Mammary epithelial cell (primary cell): ENCODE measurements at regions of chr17 and their contacts with region 1.

Region 1: GRCh38 chr17:13346996-13347765 is 254.5 kb downstream of the HS3ST3A1 start:
- DNase-seq: peak; percentile 95
- H3K4me3 ChIP-seq: no peak overlapping the region
- H3K27ac ChIP-seq: peak overlapping the region; percentile 100
- H3K4me1 ChIP-seq: peaks cover 45% of the 10 kb centered on the region
- H3K27me3 ChIP-seq: no peaks in the 10 kb centered on the region
- CTCF ChIP-seq: no peak

Region 2: DNA sequence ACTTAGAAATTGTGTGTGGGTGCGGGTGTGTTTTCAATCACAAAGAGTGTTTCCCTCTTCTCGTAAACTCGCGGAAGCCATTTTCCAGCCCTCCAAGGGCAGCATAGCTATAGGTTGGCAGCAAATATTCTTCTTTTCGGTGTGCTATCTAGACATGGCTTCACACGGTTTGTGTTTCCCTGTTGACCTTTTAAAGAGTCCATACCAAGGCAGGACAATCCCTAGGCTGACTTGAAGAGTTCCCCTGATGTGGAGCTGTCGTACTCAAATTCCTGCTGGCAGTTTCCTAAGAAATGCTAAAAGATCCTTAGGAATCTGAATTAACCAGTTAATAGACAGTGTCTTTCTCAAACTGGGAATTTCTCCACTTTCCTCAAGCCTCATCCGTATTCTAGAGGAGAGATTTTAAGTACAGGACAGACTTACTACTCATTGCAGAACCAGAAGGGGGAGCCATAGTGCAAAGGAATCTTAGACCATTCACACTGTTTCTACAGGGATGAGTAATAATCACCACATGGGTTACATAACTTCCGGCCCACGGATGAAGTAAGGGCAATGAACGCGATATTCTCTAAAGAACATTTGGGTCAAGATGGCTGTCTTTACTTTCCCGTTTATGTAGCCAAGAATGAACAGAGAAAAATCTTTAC is 40.7 kb before region 1 on chr17:
- CTCF ChIA-PET with region 1: no interaction called
- dilution Hi-C with region 1: no loop called
- in situ Hi-C with region 1: no loop called
- intact Hi-C with region 1: no loop called
- DNase-seq: peak; percentile 51
- H3K4me3 ChIP-seq: no peak overlapping the region
- H3K27ac ChIP-seq: no peak overlapping the region
- H3K4me1 ChIP-seq: no peaks in the 10 kb centered on the region
- H3K27me3 ChIP-seq: no peaks in the 10 kb centered on the region
- CTCF ChIP-seq: peak; percentile 62 to 69

Region 3: GRCh38 chr17:13372432-13372831 is 25.3 kb after region 1 on chr17:
- CTCF ChIA-PET with region 1: interaction called, 10 read pairs
- dilution Hi-C with region 1: no loop called
- in situ Hi-C with region 1: no loop called
- intact Hi-C with region 1: no loop called
- DNase-seq: no peak
- H3K4me3 ChIP-seq: no peak overlapping the region
- H3K27ac ChIP-seq: no peak overlapping the region
- H3K4me1 ChIP-seq: no peaks in the 10 kb centered on the region
- H3K27me3 ChIP-seq: no peaks in the 10 kb centered on the region
- CTCF ChIP-seq: no peak

Region 4: DNA sequence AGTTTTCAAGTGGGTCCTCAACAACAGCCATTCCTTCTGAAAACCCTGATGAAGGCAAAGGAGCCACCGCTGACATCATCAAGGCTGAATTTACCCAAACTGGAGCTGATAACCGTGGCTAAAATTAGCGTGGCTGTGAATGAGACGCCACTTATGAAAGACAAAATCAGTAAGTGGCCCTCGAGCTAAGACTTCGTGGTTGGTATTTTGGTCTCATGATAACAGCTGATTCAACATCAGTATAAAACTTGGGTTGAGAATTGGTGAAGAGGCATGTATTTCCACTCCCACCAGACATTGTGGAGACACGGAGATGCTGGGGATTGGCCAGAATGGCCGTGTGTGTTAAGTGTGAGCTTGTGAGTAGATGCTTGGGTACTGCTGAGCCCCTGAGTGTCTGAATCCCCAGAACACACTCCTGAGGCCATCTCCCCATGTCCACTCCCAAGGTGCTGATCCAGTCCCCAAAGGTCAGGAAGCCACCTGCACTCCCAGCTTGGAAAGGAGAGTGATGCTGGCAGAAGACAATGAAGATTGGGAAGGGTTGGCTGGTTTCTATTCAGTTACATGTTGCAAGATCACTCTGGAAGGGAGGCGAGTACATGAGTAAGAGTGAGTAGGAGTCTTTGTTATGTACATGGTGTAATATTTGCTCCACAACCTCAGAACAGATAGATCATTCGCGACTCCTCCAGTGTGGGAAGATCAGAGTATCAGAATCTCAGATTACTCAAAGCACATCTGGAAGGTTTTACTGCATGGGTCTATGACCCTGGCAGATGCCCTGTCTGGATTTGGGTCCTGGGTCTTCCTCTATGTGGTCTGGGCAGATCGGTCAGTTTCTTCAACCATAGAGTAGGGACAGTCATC is 46.9 kb after region 1 on chr17:
- CTCF ChIA-PET with region 1: no interaction called
- dilution Hi-C with region 1: no loop called
- in situ Hi-C with region 1: no loop called
- intact Hi-C with region 1: loop called (anchors 1 kb)
- DNase-seq: peak; percentile 89
- H3K4me3 ChIP-seq: no peak overlapping the region
- H3K27ac ChIP-seq: peak overlapping the region; percentile 70
- H3K4me1 ChIP-seq: peaks cover 29% of the 10 kb centered on the region
- H3K27me3 ChIP-seq: no peaks in the 10 kb centered on the region
- CTCF ChIP-seq: no peak

Region 5: GRCh38 chr17:13420878-13421277 is 73.7 kb after region 1 on chr17:
- CTCF ChIA-PET with region 1: no interaction called
- dilution Hi-C with region 1: no loop called
- in situ Hi-C with region 1: no loop called
- intact Hi-C with region 1: loop called (anchors 2 kb)
- DNase-seq: peak; percentile 87
- H3K4me3 ChIP-seq: no peak overlapping the region
- H3K27ac ChIP-seq: peak overlapping the region; percentile 14
- H3K4me1 ChIP-seq: peaks cover 25% of the 10 kb centered on the region
- H3K27me3 ChIP-seq: no peaks in the 10 kb centered on the region
- CTCF ChIP-seq: no peak

Region 6: DNA sequence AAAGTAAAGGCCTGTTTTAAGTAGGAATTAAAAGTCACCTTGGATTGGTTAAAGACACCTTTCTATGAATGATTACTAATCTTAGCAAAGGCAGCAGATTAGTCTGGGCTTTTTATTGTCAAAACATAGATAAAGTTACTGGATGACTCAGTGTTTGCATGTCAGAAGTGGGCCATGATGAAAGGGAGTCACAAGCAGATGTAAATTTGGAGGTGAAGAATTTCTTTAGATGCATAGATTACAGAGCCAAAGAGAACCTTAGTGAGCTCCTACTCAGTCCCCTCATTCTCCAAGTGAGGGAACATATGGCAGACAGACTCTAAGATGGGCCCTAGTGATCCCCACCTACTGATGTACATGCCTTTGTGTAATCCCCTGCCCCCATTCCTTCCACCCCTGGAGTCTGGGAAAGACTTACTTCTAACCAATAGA is 130.0 kb after region 1 on chr17:
- CTCF ChIA-PET with region 1: no interaction called
- dilution Hi-C with region 1: no loop called
- in situ Hi-C with region 1: no loop called
- intact Hi-C with region 1: loop called (anchors 10 kb)
- DNase-seq: peak; percentile 17
- H3K4me3 ChIP-seq: no peak overlapping the region
- H3K27ac ChIP-seq: no peak overlapping the region
- H3K4me1 ChIP-seq: no peaks in the 10 kb centered on the region
- H3K27me3 ChIP-seq: no peaks in the 10 kb centered on the region
- CTCF ChIP-seq: no peak